K562 (cell line): ENCODE measurements at regions of chr13 and their contacts with region 1.

Region 1: DNA sequence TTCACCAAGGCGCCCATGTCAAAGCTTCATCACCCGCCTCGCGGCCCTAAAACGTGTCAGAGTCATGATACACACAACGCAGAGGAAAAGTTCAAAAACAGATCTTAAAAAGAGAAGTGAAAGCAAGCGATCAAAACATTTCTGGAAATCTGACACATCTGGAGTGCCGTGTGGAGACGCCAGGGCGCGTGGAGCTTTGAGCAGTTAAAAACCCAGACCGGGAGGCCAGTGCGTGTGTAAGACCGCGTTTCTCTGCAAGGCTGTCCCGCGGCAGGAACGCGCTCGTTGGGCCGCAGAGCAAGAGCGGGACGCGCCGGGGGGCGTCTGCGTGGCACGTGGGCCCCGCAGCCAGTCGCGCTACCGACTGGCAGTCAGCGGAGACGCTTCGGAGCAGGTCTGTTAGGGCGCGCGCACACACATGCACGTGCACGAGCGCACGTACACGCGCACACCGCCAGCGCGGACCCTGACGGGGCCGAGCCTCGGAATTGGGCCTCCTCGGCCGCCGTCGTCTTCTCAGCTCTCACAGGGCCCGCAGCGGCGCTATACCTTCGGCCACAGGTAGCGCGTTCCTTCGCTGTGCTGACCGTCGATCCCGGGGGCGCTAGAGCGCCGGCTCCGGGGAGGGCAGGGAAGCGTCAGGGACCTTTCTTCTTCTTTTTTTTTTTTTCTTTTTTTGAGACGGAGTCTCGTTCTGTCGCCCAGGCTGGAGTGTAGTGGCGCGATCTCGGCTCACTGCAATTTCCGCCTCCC is 35.8 kb downstream of the RNF6 start:
- DNase-seq: peak; percentile 75 to 88 (median 78)
- ATAC-seq: peak; percentile 99
- H3K4me3 ChIP-seq: peak overlapping the region; percentile 38
- H3K27ac ChIP-seq: no peak overlapping the region; the same call in 1 of the 3 replicates
- H3K4me1 ChIP-seq: peaks cover 3 to 11% of the 10 kb centered on the region in 2 experiments; a peak in 2 of 5 replicates
- H3K27me3 ChIP-seq: no peaks in the 10 kb centered on the region
- CTCF ChIP-seq: peak; percentile 42 to 94 (median 66); a peak in 5 of 6 replicates
- EP300 ChIP-seq: no peak
- POLR2A ChIP-seq: peak; percentile 62
- RAD21 ChIP-seq: peak in 1 of 2 experiments; percentile 41; a peak in 1 of 4 replicates

Region 2: DNA sequence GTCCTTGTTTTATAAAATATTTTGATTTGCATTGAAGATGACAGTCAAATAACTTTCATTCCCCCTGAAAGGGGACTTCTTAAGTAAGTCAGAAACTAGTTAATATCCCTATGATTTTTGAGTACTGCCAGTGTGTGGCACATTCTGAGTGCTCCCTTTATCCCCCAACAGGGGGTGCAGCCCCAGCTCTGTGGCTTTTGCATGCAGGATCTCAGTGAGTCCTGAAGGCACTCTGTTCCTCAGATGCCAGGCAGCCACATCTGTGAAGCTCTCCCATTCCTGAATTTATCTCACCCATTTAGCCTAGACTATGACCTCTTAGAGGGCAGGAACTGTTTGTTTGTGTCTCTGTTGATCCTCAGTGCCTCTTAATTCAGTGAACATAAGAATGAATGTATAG is 190.7 kb after region 1 on chr13:
- CTCF ChIA-PET with region 1: no interaction called
- POLR2A ChIA-PET with region 1: no interaction called
- in situ Hi-C with region 1: no loop called
- intact Hi-C with region 1: no loop called
- DNase-seq: peak; percentile 6 to 20 (median 14)
- ATAC-seq: peak; percentile 81
- H3K4me3 ChIP-seq: no peak overlapping the region
- H3K27ac ChIP-seq: no peak overlapping the region
- H3K4me1 ChIP-seq: no peaks in the 10 kb centered on the region
- H3K27me3 ChIP-seq: no peaks in the 10 kb centered on the region
- CTCF ChIP-seq: peak; percentile 37 to 43 (median 40)
- EP300 ChIP-seq: no peak
- POLR2A ChIP-seq: no peak
- RAD21 ChIP-seq: 0 out of 4 replicates have a peak, but pooled peaks of 1 of the 2 experiments have one; percentile 12

Region 3: GRCh38 chr13:26482451-26483197 is 296.3 kb after region 1 on chr13:
- CTCF ChIA-PET with region 1: no interaction called
- POLR2A ChIA-PET with region 1: interaction called, 3 read pairs
- in situ Hi-C with region 1: loop called (anchors 5 kb)
- intact Hi-C with region 1: no loop called
- DNase-seq: peak; percentile 57 to 68 (median 62)
- ATAC-seq: peak; percentile 76
- H3K4me3 ChIP-seq: no peak overlapping the region
- H3K27ac ChIP-seq: no peak overlapping the region
- H3K4me1 ChIP-seq: no peaks in the 10 kb centered on the region; a peak in 1 of 5 replicates
- H3K27me3 ChIP-seq: peaks cover under 1 to 20% of the 10 kb centered on the region in 2 experiments; a peak in 3 of 5 replicates
- CTCF ChIP-seq: peak; percentile 61 to 74 (median 71)
- EP300 ChIP-seq: no peak
- POLR2A ChIP-seq: no peak
- RAD21 ChIP-seq: peak in 1 of 2 experiments; percentile 51; a peak in 2 of 4 replicates

Region 4: DNA sequence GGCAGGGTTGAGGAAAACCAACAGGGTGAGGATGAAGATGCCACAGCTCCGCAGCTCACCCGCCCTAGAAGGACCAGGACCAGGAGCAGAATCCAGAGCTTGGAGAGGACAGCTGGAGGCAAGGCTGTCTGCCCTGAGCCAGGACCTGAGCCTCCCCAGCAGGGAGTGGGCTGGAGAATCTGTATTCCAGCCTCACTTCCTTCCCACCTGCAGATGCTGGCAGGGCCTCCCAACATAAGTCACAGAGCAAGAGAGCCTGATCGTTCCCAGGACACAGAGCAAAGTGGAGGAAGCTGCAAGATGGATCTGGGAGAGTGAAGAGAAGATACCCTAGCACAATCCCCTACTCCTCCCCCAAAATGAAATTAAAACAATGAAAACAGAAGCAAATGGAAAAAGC is 309.5 kb after region 1 on chr13:
- CTCF ChIA-PET with region 1: interaction called, 26 read pairs
- POLR2A ChIA-PET with region 1: no interaction called
- in situ Hi-C with region 1: no loop called
- intact Hi-C with region 1: loop called (anchors 1 kb)
- DNase-seq: no peak
- ATAC-seq: no peak
- H3K4me3 ChIP-seq: no peak overlapping the region
- H3K27ac ChIP-seq: no peak overlapping the region
- H3K4me1 ChIP-seq: no peaks in the 10 kb centered on the region
- H3K27me3 ChIP-seq: peaks cover 2 to 6% of the 10 kb centered on the region in 2 experiments; a peak in 2 of 5 replicates
- CTCF ChIP-seq: no peak
- EP300 ChIP-seq: no peak
- POLR2A ChIP-seq: no peak
- RAD21 ChIP-seq: no peak

Region 5: GRCh38 chr13:26628706-26629105 is 442.4 kb after region 1 on chr13:
- CTCF ChIA-PET with region 1: no interaction called
- POLR2A ChIA-PET with region 1: no interaction called
- in situ Hi-C with region 1: loop called (anchors 10 kb)
- intact Hi-C with region 1: no loop called
- DNase-seq: peak in 1 of 4 experiments; percentile 9
- ATAC-seq: peak; percentile 64
- H3K4me3 ChIP-seq: no peak overlapping the region
- H3K27ac ChIP-seq: no peak overlapping the region
- H3K4me1 ChIP-seq: no peaks in the 10 kb centered on the region
- H3K27me3 ChIP-seq: no peaks in the 10 kb centered on the region
- CTCF ChIP-seq: peak in 2 of 3 experiments; percentile 18 to 24; a peak in 1 of 6 replicates
- EP300 ChIP-seq: no peak
- POLR2A ChIP-seq: no peak
- RAD21 ChIP-seq: peak in 1 of 2 experiments; percentile 18; a peak in 1 of 4 replicates

Region 6: GRCh38 chr13:26698392-26699196 is 512.3 kb after region 1 on chr13:
- CTCF ChIA-PET with region 1: interaction called, 7 read pairs
- POLR2A ChIA-PET with region 1: interaction called, 3 read pairs
- in situ Hi-C with region 1: no loop called
- intact Hi-C with region 1: loop called (anchors 1 kb)
- DNase-seq: peak; percentile 63 to 73 (median 68)
- ATAC-seq: peak; percentile 88
- H3K4me3 ChIP-seq: no peak overlapping the region
- H3K27ac ChIP-seq: no peak overlapping the region
- H3K4me1 ChIP-seq: no peaks in the 10 kb centered on the region
- H3K27me3 ChIP-seq: no peaks in the 10 kb centered on the region; a peak in 1 of 5 replicates
- CTCF ChIP-seq: peak; percentile 85 to 90 (median 85)
- EP300 ChIP-seq: no peak
- POLR2A ChIP-seq: no peak
- RAD21 ChIP-seq: peak; percentile 58 to 82

Region 7: DNA sequence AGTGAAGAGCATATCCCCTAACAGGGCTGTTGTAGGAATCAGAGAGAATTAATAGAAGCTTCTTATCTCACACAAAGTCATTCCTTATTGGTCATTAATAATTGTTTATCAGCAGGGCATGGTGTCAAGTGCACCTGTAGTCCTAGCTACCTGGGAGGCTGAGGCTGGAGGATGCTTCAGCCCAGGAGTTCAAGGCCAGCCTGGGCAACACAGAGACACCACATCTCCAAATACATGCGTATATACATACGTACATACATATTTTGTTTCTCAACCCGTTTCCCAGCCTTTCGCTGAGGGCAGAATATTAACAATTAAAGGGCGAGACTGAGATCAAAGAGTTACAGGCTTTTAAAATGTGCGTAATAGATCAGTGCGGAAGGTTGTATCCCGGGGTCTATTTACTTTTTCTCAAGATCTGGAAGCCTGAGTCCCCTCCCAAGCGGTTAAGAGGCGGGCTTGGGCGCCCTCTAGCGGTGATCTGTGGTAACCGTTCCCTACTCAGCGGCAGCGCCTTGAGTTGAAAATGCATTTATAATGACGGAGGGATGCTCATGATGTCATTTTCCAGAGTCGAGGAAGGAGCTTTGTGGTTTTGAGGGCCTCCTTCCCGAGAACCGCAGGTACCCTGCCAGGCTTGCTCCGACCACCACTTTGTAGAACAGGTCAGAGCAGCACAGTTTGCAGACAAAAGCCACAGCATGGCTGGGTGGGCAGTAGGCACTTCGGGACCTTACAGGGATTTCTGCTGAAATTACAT is 743.9 kb after region 1 on chr13:
- CTCF ChIA-PET with region 1: interaction called, 5 read pairs
- POLR2A ChIA-PET with region 1: no interaction called
- in situ Hi-C with region 1: loop called (anchors 25 kb)
- intact Hi-C with region 1: no loop called
- DNase-seq: peak; percentile 71 to 77 (median 72)
- ATAC-seq: peak; percentile 95
- H3K4me3 ChIP-seq: no peak overlapping the region
- H3K27ac ChIP-seq: no peak overlapping the region
- H3K4me1 ChIP-seq: no peaks in the 10 kb centered on the region; a peak in 1 of 5 replicates
- H3K27me3 ChIP-seq: peaks cover 0 to 15% of the 10 kb centered on the region in 2 experiments
- CTCF ChIP-seq: peak; percentile 67 to 84 (median 81)
- EP300 ChIP-seq: no peak
- POLR2A ChIP-seq: no peak
- RAD21 ChIP-seq: peak; percentile 31 to 64